Cardiac septum (tissue), 1 donor: ENCODE measurements at regions of chr6 and their contacts with region 1.

Region 1: DNA sequence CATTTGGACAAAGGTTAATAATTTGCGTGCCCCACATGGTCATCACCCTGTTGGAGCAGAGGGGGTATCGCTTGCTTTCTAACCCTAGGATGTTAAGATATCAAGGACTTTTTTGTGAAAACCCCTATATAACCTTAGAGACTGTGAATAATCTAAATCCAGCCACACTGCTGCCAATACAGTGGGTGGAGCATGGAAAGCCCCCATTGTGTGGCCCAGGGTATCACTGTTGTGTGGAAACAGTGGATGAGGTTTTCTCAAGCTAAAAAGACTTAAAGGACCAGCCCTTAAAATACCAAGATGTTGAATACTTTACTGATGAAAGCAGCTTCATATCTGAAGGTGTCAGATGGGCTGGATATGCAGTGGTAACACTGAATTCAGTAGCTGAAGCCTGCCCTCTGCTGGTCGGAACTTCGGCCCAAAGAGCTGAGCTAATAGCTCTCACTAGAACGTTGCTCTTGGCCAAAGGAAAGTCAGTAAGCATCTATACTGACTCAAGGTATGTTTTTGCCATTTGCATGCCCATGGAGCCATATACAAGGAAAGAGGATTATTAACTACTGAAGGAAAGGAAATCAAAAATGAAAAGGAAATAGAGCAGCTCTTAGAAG is 695.2 kb downstream of the PHF3 start:
- DNase-seq: no peak

Region 2: GRCh38 chr6:64012351-64013001 is 318.3 kb before region 1 on chr6:
- intact Hi-C with region 1: loop called (anchors 2 kb)
- DNase-seq: no peak